ENCODE measurements at regions of chr7 and their contacts with region 1.

Region 1: GRCh38 chr7:106731187-106731586 is 70.2 kb upstream of the CCDC71L start:
- DNase-seq: no peak
- H3K4me3 Mint-ChIP-seq: no peak overlapping the region
- H3K27ac Mint-ChIP-seq: no peak overlapping the region
- H3K4me1 Mint-ChIP-seq: peaks cover 49% of the 10 kb centered on the region
- H3K27me3 Mint-ChIP-seq: no peaks in the 10 kb centered on the region

Region 2: GRCh38 chr7:106548491-106548890 is 182.7 kb before region 1 on chr7:
- intact Hi-C with region 1: no loop called
- DNase-seq: no peak
- H3K4me3 Mint-ChIP-seq: no peak overlapping the region
- H3K27ac Mint-ChIP-seq: no peak overlapping the region
- H3K4me1 Mint-ChIP-seq: peaks cover 8% of the 10 kb centered on the region
- H3K27me3 Mint-ChIP-seq: peaks cover 2% of the 10 kb centered on the region

Region 3: GRCh38 chr7:106717955-106718871 is 13.0 kb before region 1 on chr7:
- intact Hi-C with region 1: loop called (anchors 1 kb)
- DNase-seq: peak; percentile 56
- H3K4me3 Mint-ChIP-seq: no peak overlapping the region
- H3K27ac Mint-ChIP-seq: no peak overlapping the region
- H3K4me1 Mint-ChIP-seq: peaks cover 30% of the 10 kb centered on the region
- H3K27me3 Mint-ChIP-seq: no peaks in the 10 kb centered on the region

Region 4: GRCh38 chr7:106767498-106768323 is 36.5 kb after region 1 on chr7:
- intact Hi-C with region 1: loop called (anchors 5 kb)
- DNase-seq: no peak
- H3K4me3 Mint-ChIP-seq: peak overlapping the region; percentile 44
- H3K27ac Mint-ChIP-seq: peak overlapping the region; percentile 76
- H3K4me1 Mint-ChIP-seq: peaks cover 46% of the 10 kb centered on the region
- H3K27me3 Mint-ChIP-seq: no peaks in the 10 kb centered on the region

Measured in activated T-helper 2 cell treated with anti-CD3 and anti-CD28 coated beads, Interferon-gamma antibody, Interleukin-2, Interleukin-4, amounts not matched to agents 10 μg/mL and 5 μg/mL and 100 μg/mL, durations not matched to agents 14 hours and 24 hours and 36 hours (primary cell).